ENCODE measurements at regions of chr14 and their contacts with region 1.

Region 1: GRCh38 chr14:64423987-64424386 is 35.8 kb downstream of the MTHFD1 start:
- DNase-seq: no peak
- CTCF ChIP-seq: no peak

Region 2: DNA sequence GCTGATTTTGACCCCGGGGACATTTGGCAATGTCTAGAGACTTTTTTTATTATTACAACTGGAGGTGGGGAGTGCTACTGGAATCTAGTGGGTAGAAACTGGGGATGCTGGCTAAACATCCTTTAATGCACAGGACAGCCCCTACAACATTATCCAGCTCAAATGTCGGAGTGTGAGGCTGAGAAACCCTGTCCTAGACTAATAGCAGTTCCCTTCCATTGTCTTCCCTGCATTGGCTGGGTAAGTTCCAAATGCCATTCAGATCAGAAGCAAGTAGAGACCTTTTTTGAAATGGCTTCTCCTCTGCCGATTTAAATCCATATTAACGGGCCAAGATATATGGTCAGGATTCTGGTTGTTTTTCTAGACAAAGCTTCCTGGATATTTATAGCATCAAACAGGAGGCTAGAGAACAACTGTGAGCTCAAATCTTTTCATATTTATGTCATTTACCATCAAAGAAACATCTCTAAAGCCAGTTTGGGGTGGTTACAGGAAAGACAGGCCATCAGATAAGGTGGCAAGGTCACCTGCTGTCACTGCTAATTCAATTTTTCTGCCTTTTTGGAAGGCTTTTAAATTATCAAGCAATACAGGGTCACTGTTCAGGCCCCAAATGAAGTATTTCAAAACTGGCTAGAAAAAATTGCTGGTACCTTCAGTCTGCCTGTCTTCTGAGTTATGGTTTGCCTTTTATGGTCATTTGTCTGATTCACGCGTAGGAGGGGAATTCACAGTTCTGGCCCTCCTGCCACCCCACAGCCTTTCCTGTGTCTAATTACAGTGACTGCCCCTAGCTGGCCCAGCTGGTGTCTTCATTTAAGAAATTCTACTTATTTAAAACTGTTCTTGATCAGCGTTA is 21.2 kb after region 1 on chr14:
- CTCF ChIA-PET with region 1: interaction called, 205 read pairs
- POLR2A ChIA-PET with region 1: no interaction called
- DNase-seq: peak; percentile 83
- CTCF ChIP-seq: no peak

Region 3: DNA sequence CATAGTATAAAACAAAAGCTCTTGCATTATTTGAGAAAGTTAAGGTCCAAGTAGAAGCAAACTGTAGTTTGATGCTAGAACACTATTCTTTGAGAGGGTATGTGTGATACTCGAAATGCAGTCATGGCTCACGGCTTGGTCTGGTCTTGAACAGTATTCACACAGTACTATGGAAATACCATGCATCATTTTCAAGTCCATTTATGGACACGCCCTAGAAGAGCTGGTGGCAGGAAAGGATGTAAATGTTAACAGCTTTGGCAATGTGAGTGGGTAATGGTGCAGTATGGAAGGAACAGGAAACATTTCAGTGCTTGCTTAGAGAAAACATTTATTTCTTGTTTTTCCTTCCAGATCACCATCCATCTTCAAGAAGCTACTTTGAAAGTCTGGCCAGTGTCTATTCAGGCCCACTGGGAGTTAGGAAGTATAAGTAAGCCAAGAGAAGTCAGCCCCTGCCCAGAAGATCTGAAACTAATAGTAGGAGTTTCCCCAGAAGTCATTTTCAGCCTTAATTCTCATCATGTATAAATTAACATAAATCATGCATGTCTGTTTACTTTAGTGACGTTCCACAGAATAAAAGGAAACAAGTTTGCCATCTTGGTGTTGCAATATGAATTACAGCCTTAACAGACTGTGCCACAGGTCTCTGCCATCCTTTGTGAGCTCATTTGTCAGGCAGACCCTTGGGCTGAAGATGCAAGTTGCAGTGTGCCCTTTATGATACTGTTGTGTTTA is 35.6 kb after region 1 on chr14:
- CTCF ChIA-PET with region 1: interaction called, 24 read pairs
- POLR2A ChIA-PET with region 1: no interaction called
- DNase-seq: no peak
- CTCF ChIP-seq: no peak

Region 4: GRCh38 chr14:64465191-64465822 is 41.3 kb after region 1 on chr14 and contains the start of gene AKAP5:
- CTCF ChIA-PET with region 1: interaction called, 24 read pairs
- POLR2A ChIA-PET with region 1: no interaction called
- DNase-seq: peak; percentile 78
- CTCF ChIP-seq: no peak

Region 5: DNA sequence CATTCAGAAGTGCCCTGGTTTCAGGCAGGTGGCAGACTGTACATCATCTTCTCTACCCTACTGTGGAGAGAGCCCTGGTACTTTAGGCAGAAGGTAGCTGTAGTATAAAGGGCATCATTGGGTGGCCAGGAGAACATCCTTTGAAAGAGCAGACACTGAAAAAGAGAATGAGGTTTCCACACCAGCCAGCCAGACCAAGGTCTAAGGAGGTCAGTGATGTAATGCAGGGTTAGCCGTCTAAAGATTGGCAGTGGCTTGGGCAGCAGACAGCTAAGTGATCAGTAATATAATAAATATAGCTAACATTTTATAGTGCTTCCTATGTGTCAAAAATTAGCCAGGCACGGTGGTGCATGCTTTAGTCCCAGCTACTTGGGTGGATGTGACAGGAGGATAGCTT is 67.7 kb after region 1 on chr14:
- CTCF ChIA-PET with region 1: interaction called, 12 read pairs
- POLR2A ChIA-PET with region 1: no interaction called
- DNase-seq: no peak
- CTCF ChIP-seq: no peak

Region 6: DNA sequence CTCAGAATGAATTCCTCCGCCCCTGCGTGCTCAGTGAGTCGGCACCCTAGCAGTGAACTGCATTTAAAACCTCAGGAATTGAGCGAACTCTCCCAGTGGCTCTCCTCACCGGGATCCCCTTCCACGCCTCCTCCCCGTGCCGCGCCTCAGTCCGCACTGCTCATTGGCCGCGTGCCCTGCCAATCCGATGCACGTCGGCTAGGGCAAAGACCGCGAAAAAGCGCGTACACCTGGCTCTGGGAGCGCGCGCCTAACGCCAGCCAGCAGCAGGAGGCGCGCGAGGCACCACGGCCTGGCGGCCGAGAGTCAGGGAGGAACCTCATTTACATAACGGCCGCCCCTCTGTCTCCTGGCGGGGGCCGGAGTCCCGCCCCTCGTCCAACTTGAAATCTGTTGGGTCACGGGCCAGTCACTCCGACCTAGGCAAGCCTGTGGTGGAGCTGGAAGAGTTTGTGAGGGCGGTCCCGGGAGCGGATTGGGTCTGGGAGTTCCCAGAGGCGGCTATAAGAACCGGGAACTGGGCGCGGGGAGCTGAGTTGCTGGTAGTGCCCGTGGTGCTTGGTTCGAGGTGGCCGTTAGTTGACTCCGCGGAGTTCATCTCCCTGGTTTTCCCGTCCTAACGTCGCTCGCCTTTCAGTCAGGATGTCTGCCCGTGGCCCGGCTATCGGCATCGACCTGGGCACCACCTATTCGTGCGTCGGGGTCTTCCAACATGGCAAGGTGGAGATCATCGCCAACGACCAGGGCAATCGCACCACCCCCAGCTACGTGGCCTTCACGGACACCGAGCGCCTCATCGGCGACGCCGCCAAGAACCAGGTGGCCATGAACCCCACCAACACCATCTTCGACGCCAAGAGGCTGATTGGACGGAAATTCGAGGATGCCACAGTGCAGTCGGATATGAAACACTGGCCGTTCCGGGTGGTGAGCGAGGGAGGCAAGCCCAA is 116.5 kb after region 1 on chr14 and contains the start of gene HSPA2:
- CTCF ChIA-PET with region 1: no interaction called
- POLR2A ChIA-PET with region 1: no interaction called
- DNase-seq: peak; percentile 94
- CTCF ChIP-seq: peak; percentile 77

Measured in GM10248 (cell line).